Left cardiac atrium (tissue), 4 donors: ENCODE measurements at regions of chr1 and their contacts with region 1.

Region 1: DNA sequence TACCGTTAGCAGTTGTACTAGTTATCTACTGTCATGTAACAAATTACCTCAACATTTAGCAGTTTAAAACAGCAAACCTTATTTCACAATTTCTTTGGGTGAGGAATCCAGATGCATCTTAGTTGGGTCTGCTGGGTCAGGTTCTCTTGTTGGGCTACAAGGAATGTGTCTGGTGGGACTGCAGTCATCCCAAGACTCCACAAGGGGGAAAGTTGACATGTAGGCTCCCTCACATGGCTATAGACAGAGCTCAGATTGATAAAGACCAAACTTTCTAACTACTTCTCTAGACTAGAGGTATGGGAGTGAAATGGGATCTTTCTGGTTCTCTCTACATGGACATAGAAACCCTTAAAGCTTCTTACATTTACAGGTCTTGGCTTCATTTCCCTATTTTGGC is 160.9 kb downstream of the UCK2 start:
- DNase-seq: no peak
- ATAC-seq: no peak

Region 2: GRCh38 chr1:165851034-165851658 is 137.1 kb before region 1 on chr1:
- intact Hi-C with region 1: no loop called
- DNase-seq: no peak
- ATAC-seq: no peak

Region 3: GRCh38 chr1:166040202-166040997 is 52.1 kb after region 1 on chr1:
- intact Hi-C with region 1: loop called in 1 of 2 experiments (anchors 10 kb)
- DNase-seq: no peak
- ATAC-seq: no peak